ENCODE measurements at regions of chr14 and their contacts with region 1.

Region 1: DNA sequence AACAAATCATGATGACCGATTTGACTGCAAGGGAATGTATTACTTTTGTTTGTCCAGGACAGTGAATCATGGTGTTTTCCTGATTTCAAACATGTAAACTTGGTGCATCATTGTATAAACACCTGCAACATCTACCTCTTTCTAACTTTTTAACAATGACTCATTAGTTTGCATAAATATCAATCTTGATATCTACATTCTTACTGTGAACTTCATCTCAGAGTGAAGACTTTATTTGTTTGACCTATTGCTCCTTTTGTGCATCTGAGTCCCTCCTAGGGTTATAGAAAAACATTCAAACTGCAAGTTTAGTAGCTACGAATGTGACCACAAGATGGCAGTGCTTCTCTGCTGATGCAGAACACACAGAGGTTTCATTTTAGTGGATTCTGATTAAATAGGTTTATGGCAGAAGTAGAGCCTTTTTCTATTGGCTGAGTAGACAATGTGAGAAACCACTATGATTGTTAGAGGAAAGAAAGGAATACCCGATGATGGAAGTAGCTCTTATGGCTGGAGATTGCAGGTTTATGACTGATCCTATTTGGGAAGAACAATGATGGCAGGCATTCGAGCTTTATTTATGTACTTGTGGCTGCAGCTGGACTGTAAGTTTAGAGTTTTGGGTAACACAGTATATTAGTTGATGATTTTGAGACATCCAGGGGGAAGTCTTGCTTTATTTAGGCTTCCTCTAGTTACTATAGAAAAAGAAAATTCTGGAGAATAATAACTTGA is 244.2 kb upstream of the OR4E1 start:
- DNase-seq: peak in 9 of 10 donors; percentile 37 to 80 (median 64)
- ATAC-seq: peak; percentile 65 to 70
- H3K4me3 Mint-ChIP-seq: peak overlapping the region; percentile 64 to 89 (median 81)
- H3K27ac Mint-ChIP-seq: peak overlapping the region; percentile 3 to 91 (median 82)
- H3K4me1 Mint-ChIP-seq: peaks cover 12 to 73% (median 50%) of the 10 kb centered on the region in 4 donors
- H3K27me3 Mint-ChIP-seq: no peaks in the 10 kb centered on the region

Region 2: GRCh38 chr14:21614240-21614639 is 303.6 kb before region 1 on chr14:
- POLR2A ChIA-PET with region 1: no interaction called
- DNase-seq: no peak
- ATAC-seq: no peak
- H3K4me3 Mint-ChIP-seq: peak overlapping the region in 1 of 10 donors; percentile 49
- H3K27ac Mint-ChIP-seq: peak overlapping the region in 1 of 10 donors; percentile 67
- H3K4me1 Mint-ChIP-seq: no peaks in the 10 kb centered on the region
- H3K27me3 Mint-ChIP-seq: peaks cover 3 to 31% (median 12%) of the 10 kb centered on the region in 5 donors

Region 3: GRCh38 chr14:21882226-21882625 is 35.6 kb before region 1 on chr14:
- POLR2A ChIA-PET with region 1: no interaction called
- DNase-seq: no peak
- ATAC-seq: no peak
- H3K4me3 Mint-ChIP-seq: no peak overlapping the region
- H3K27ac Mint-ChIP-seq: no peak overlapping the region
- H3K4me1 Mint-ChIP-seq: peaks cover 2 to 11% (median 7%) of the 10 kb centered on the region in 4 donors
- H3K27me3 Mint-ChIP-seq: no peaks in the 10 kb centered on the region

Region 4: DNA sequence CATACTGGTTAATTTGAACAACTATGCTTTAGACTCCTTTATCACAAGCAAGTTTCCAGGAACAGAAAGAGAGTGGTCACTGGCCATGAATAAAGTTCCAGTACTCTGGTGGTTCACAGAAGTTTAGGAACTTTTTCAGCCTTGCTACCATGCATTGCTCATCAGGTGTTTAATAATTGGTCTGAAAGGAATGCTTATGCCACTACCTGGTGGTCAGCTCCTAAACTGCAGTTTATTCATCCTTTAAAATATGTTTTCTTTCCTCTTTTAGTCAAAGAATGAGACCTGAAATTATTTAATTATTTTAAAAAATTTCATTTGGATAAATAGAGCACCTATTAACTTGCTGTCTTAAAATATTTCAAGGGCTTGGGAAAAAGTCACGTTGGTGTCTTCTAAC is 15.8 kb after region 1 on chr14:
- POLR2A ChIA-PET with region 1: interaction called, 11 read pairs
- DNase-seq: peak in 2 of 10 donors; percentile 28 to 30
- ATAC-seq: peak in 1 of 2 donors; percentile 27
- H3K4me3 Mint-ChIP-seq: no peak overlapping the region
- H3K27ac Mint-ChIP-seq: no peak overlapping the region
- H3K4me1 Mint-ChIP-seq: peaks cover 2 to 15% (median 12%) of the 10 kb centered on the region in 4 donors
- H3K27me3 Mint-ChIP-seq: no peaks in the 10 kb centered on the region